ENCODE measurements at regions of chrX and their contacts with region 1.

Region 1: GRCh38 chrX:11739776-11740175 is 18.3 kb upstream of the MSL3 start:
- DNase-seq: peak; percentile 66
- ATAC-seq: peak; percentile 64
- H3K4me3 ChIP-seq: no peak overlapping the region
- H3K27ac ChIP-seq: peak overlapping the region; percentile 73
- H3K4me1 ChIP-seq: peaks cover 17% of the 10 kb centered on the region; the same call in 1 of the 2 replicates
- H3K27me3 ChIP-seq: no peaks in the 10 kb centered on the region
- CTCF ChIP-seq: no peak
- EP300 ChIP-seq: peak; percentile 85 to 92
- POLR2A ChIP-seq: no peak
- RAD21 ChIP-seq: no peak

Region 2: DNA sequence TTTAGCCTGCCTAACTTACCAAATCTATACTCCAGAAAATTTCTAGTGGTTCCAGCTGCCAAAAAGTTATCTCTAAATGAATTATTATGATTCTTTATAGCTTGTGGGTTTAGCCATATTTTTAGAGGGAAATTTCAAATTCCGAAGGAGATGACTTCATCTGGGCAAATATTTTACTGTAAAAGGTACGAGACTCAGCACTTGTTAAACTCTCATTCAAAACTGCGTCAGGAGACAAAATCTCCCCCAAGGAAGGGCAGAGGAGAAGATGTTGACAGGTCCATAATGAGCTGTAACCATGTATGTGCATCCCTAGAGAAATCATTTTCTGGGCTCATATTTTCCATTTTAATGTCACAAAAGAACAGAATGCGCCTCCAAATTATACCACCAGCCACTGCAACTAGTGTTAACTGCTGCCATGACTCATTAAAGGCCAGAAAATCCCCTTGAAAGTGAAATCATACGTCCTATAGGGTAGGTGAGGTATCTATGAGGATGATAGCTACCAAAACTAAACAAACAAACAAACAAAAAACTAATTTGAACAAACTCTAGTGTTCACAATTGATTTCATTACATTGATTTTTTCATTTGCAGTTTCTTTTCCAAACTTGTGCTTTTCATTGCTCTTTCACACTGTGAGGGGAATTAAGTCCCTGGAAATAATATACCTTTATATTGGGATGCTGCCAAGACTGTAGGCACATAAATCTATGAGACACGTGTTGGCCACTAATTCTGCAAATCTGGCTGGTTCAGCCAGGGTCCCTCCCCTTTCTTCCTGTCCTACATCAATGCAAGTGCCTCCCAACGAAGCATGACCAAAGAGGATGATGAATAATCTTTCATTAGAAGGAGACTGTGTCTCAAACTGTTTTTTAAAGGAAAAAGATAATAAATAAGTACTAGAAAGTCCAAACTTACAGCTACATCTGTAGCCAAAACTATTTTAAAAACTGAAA is 159.9 kb before region 1 on chrX:
- CTCF ChIA-PET with region 1: no interaction called
- POLR2A ChIA-PET with region 1: no interaction called
- RAD21 ChIA-PET with region 1: interaction called, 13 read pairs
- SMC1A ChIA-PET with region 1: interaction called, 9 read pairs
- in situ Hi-C with region 1: no loop called
- intact Hi-C with region 1: no loop called
- DNase-seq: no peak
- ATAC-seq: peak; percentile 81
- H3K4me3 ChIP-seq: no peak overlapping the region
- H3K27ac ChIP-seq: no peak overlapping the region
- H3K4me1 ChIP-seq: no peaks in the 10 kb centered on the region
- H3K27me3 ChIP-seq: no peaks in the 10 kb centered on the region
- CTCF ChIP-seq: no peak
- EP300 ChIP-seq: no peak
- POLR2A ChIP-seq: no peak
- RAD21 ChIP-seq: no peak

Region 3: DNA sequence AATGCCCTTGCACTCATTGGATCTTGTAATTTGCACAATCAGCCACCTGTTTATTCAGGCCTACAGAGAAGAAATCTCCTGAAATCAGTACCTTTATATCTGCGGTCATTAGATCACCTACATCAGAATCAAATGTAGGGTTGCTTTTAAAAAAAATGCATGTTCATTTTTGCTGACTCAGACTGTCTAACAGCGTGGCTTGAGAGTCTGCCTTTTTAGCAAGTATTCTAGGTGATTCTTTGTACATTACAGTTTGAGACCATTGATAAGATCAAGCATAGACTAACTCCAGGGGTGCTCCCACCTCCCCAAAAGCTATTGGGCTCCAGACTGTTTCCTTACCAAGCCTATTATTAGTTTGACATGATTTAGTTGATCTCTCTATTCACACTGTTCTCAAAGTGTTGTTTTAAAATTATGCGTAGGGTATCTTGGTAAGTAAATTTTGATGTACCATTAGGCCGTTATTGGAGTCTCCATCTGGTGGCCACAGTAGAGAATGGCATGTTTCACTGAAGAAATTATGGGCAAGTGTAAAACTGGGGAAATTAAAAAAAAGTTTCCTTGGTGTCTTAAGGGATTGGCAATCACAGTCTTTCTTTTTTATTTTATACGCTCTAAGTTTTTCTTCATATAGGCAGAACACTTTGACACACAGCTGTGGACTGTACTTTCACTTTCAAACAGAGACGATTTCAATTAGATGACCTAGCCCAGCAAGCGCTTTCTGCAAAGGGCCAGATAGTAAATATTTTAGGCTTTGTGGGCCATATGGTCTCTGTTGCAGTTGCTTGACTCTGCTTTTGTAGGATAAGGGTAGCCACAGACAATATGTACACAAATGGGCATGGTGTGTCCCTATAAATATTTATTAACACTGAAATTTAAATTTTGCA is 15.4 kb before region 1 on chrX:
- CTCF ChIA-PET with region 1: interaction called, 21 read pairs
- POLR2A ChIA-PET with region 1: interaction called, 4 read pairs
- RAD21 ChIA-PET with region 1: interaction called, 3 read pairs
- SMC1A ChIA-PET with region 1: interaction called, 16 read pairs
- in situ Hi-C with region 1: no loop called
- intact Hi-C with region 1: no loop called
- DNase-seq: no peak
- ATAC-seq: peak; percentile 85
- H3K4me3 ChIP-seq: no peak overlapping the region
- H3K27ac ChIP-seq: no peak overlapping the region
- H3K4me1 ChIP-seq: no peaks in the 10 kb centered on the region
- H3K27me3 ChIP-seq: no peaks in the 10 kb centered on the region
- CTCF ChIP-seq: peak; percentile 63 to 68 (median 64)
- EP300 ChIP-seq: no peak
- POLR2A ChIP-seq: no peak
- RAD21 ChIP-seq: peak; percentile 64

Region 4: GRCh38 chrX:11750046-11750445 is 10.3 kb after region 1 on chrX:
- CTCF ChIA-PET with region 1: interaction called, 31 read pairs
- POLR2A ChIA-PET with region 1: interaction called, 8 read pairs
- RAD21 ChIA-PET with region 1: interaction called, 23 read pairs
- SMC1A ChIA-PET with region 1: interaction called, 36 read pairs
- in situ Hi-C with region 1: no loop called
- intact Hi-C with region 1: no loop called
- DNase-seq: no peak
- ATAC-seq: no peak
- H3K4me3 ChIP-seq: no peak overlapping the region
- H3K27ac ChIP-seq: no peak overlapping the region
- H3K4me1 ChIP-seq: no peaks in the 10 kb centered on the region; the same call in 1 of the 2 replicates
- H3K27me3 ChIP-seq: no peaks in the 10 kb centered on the region
- CTCF ChIP-seq: no peak
- EP300 ChIP-seq: no peak
- POLR2A ChIP-seq: no peak
- RAD21 ChIP-seq: no peak

Region 5: GRCh38 chrX:11758400-11759171 is 18.8 kb after region 1 on chrX:
- CTCF ChIA-PET with region 1: interaction called, 31 read pairs
- POLR2A ChIA-PET with region 1: interaction called, 17 read pairs
- RAD21 ChIA-PET with region 1: interaction called, 36 read pairs
- SMC1A ChIA-PET with region 1: interaction called, 36 read pairs
- in situ Hi-C with region 1: no loop called
- intact Hi-C with region 1: no loop called
- DNase-seq: no peak
- ATAC-seq: peak; percentile 44
- H3K4me3 ChIP-seq: peak overlapping the region; percentile 60
- H3K27ac ChIP-seq: peak overlapping the region; percentile 90
- H3K4me1 ChIP-seq: peaks cover 7% of the 10 kb centered on the region; the same call in 1 of the 2 replicates
- H3K27me3 ChIP-seq: no peaks in the 10 kb centered on the region
- CTCF ChIP-seq: peak; percentile 34 to 68 (median 59); a peak in 4 of 6 replicates
- EP300 ChIP-seq: peak in 1 of 2 experiments; percentile 10; a peak in 1 of 4 replicates
- POLR2A ChIP-seq: no peak; the same call in 1 of the 2 replicates
- RAD21 ChIP-seq: peak; percentile 43

Region 6: DNA sequence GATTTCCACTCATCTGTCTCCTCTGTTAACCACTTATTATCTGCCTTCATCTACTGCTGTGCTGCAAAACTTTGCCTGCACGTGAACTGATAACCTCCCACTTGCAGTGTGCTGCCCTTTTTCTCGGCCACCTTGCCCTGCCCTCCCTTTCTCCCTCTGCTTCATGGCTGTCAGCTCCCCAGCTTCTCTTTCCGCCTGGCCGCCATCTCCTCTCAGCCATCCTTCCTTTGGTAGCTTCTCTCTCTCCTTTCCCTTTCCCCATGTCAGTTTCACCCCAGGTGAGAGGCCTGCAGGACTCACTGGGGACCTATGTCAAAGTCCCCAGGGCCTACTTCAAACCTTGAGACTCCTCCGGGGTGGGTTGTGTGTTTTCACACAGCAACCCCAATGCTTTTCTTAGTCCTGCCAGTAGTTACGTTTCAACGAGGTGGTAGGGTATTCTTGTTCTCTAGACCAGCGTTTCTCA is 24.9 kb after region 1 on chrX:
- CTCF ChIA-PET with region 1: interaction called, 5 read pairs
- POLR2A ChIA-PET with region 1: interaction called, 17 read pairs
- RAD21 ChIA-PET with region 1: interaction called, 76 read pairs
- SMC1A ChIA-PET with region 1: interaction called, 23 read pairs
- in situ Hi-C with region 1: no loop called
- intact Hi-C with region 1: loop called (anchors 2 kb)
- DNase-seq: no peak
- ATAC-seq: peak; percentile 17
- H3K4me3 ChIP-seq: no peak overlapping the region
- H3K27ac ChIP-seq: peak overlapping the region; percentile 48
- H3K4me1 ChIP-seq: peaks cover 30% of the 10 kb centered on the region
- H3K27me3 ChIP-seq: no peaks in the 10 kb centered on the region
- CTCF ChIP-seq: no peak
- EP300 ChIP-seq: peak; percentile 24 to 35; a peak in 1 of 4 replicates
- POLR2A ChIP-seq: no peak
- RAD21 ChIP-seq: no peak